ENCODE measurements at regions of chr1 and their contacts with region 1.

Region 1: GRCh38 chr1:65265651-65266351 is 43.5 kb upstream of the DNAJC6 start:
- DNase-seq: peak; percentile 57
- ATAC-seq: peak; percentile 97
- H3K4me3 ChIP-seq: peak overlapping the region; percentile 58 to 67 (median 59)
- H3K27ac ChIP-seq: no peak overlapping the region
- H3K4me1 ChIP-seq: peaks cover 20% of the 10 kb centered on the region
- H3K27me3 ChIP-seq: no peaks in the 10 kb centered on the region
- CTCF ChIP-seq: peak; percentile 72
- EP300 ChIP-seq: no peak
- POLR2A ChIP-seq: no peak
- RAD21 ChIP-seq: no peak

Region 2: GRCh38 chr1:65309304-65310077 is 43.7 kb after region 1 on chr1 and contains the start of gene DNAJC6:
- CTCF ChIA-PET with region 1: no interaction called
- POLR2A ChIA-PET with region 1: no interaction called
- in situ Hi-C with region 1: no loop called
- intact Hi-C with region 1: loop called (anchors 5 kb)
- DNase-seq: peak; percentile 20
- ATAC-seq: peak; percentile 99
- H3K4me3 ChIP-seq: peak within 1 kb of the TSS; percentile 30 to 62 (median 59)
- H3K27ac ChIP-seq: no peak within 1 kb of the TSS
- H3K4me1 ChIP-seq: peaks cover 19% of the 10 kb centered on the region
- H3K27me3 ChIP-seq: 0 out of 5 replicates have a peak, but pooled peaks cover 0 to 4% of the 10 kb centered on the region in 2 experiments
- CTCF ChIP-seq: peak; percentile 43
- EP300 ChIP-seq: no peak
- POLR2A ChIP-seq: no peak
- RAD21 ChIP-seq: peak; percentile 35; the same call in 1 of the 2 replicates
- total RNA-seq, gene DNAJC6: 0.80 and 1.0 TPM in 2 replicates

Measured in HepG2 (cell line).